ENCODE measurements at regions of chr18 and their contacts with region 1.

Region 1: GRCh38 chr18:59996370-59996966 is 96.7 kb downstream of the PMAIP1 start:
- H3K4me3 ChIP-seq: no peak overlapping the region
- H3K27ac ChIP-seq: no peak overlapping the region
- H3K4me1 ChIP-seq: no peaks in the 10 kb centered on the region
- CTCF ChIP-seq: no peak

Region 2: GRCh38 chr18:59837586-59837985 is 158.9 kb before region 1 on chr18:
- CTCF ChIA-PET with region 1: interaction called, 24 read pairs
- POLR2A ChIA-PET with region 1: no interaction called
- H3K4me3 ChIP-seq: no peak overlapping the region
- H3K27ac ChIP-seq: no peak overlapping the region
- H3K4me1 ChIP-seq: peaks cover 7% of the 10 kb centered on the region
- CTCF ChIP-seq: peak; percentile 92

Region 3: DNA sequence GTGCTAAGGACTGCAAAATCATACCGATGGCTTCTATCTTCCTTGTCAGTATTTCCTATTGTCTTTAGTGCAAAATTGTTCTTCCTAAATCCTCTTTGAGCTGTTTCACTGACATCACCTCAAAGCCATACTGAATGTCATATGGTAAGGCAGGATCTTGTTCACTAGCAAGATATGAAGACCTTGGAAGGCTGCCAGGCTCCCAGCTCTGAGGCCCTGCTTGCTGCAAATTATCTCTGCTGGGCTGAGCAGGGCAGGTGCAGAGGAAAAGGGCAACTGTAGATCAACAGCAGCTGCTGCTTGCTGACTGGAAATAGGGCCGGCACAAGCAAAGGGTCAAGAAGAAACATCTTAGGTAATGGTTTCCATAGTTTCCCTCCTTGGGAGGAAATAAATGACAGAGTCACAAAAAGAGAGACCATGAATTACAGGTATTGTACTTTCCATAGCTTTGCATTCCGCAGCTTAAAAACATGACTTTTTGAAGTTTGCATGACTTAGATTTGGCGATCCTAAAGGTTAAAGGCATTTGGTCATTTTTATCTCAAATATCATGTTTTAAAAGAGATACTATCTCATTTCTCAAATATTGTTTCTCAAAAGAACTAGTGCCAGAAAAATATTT is 38.4 kb before region 1 on chr18:
- CTCF ChIA-PET with region 1: interaction called, 14 read pairs
- POLR2A ChIA-PET with region 1: no interaction called
- H3K4me3 ChIP-seq: no peak overlapping the region
- H3K27ac ChIP-seq: no peak overlapping the region
- H3K4me1 ChIP-seq: peaks cover 13% of the 10 kb centered on the region
- CTCF ChIP-seq: no peak

Region 4: GRCh38 chr18:60010984-60011383 is 14.5 kb after region 1 on chr18:
- CTCF ChIA-PET with region 1: interaction called, 17 read pairs
- POLR2A ChIA-PET with region 1: no interaction called
- H3K4me3 ChIP-seq: no peak overlapping the region
- H3K27ac ChIP-seq: no peak overlapping the region
- H3K4me1 ChIP-seq: no peaks in the 10 kb centered on the region
- CTCF ChIP-seq: no peak

Region 5: DNA sequence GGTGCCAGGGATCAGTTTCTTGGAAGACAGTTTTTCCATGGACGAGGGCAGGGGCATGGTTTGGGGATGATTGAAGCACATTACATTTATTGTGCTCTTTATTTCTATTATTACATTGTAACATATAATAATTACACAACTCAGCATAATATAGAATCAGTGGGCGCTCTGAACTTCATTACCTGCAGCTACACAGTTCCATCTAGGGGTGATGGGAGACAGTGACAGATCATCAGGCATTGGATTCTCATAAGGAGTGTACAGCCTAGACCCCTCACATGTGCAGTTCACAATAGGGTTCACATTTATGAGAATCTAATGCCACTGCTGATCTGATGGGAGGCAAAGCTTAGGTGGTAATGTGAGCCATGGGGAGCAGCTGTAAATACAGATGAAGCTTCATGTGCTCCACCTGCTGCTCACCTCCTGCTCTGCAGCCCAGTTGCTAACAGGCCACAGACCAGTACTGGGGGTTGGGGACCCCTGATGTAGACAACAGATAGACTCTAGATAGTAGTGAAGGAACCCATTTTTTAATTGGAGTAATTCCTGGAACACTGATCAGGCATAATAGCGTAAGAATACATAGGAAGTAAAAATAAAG is 417.6 kb after region 1 on chr18:
- CTCF ChIA-PET with region 1: interaction called, 16 read pairs
- POLR2A ChIA-PET with region 1: no interaction called
- H3K4me3 ChIP-seq: no peak overlapping the region
- H3K27ac ChIP-seq: no peak overlapping the region
- H3K4me1 ChIP-seq: no peaks in the 10 kb centered on the region
- CTCF ChIP-seq: peak; percentile 42